H1 (cell line): ENCODE measurements at regions of chr13 and their contacts with region 1.

Region 1: DNA sequence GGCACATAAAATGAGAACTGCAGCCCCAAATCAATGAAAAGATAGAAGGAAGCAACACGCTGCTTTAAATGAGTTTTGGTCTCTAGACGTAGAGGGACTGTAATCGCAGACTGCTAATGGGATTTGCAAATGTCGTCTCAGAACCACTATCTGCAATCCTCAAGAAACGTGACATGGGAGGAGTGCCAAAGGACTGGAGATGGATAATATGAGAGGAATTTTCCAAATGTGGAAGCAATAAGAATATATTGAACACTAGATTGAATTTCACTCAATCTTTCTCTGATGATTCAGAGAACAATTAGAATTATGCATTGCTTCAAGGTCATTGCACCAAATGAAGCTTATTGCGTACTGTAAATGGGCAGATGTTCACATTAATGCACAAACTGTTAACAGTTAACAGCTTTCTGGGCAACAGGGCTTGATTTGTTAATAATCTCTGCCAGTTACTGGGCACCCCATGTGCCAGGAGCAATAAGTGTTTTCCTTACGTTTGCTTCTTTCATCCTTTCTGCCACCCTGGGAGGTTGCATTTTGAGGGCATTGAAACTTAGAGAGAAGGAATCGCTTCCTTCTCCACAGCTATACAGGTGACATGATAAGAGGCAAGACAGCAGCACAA is 62.8 kb upstream of the WASF3 start:
- DNase-seq: no peak
- H3K4me3 ChIP-seq: no peak overlapping the region
- H3K27ac ChIP-seq: no peak overlapping the region
- H3K4me1 ChIP-seq: no peaks in the 10 kb centered on the region
- H3K27me3 ChIP-seq: no peaks in the 10 kb centered on the region
- CTCF ChIP-seq: no peak
- EP300 ChIP-seq: no peak
- POLR2A ChIP-seq: no peak
- RAD21 ChIP-seq: no peak

Region 2: DNA sequence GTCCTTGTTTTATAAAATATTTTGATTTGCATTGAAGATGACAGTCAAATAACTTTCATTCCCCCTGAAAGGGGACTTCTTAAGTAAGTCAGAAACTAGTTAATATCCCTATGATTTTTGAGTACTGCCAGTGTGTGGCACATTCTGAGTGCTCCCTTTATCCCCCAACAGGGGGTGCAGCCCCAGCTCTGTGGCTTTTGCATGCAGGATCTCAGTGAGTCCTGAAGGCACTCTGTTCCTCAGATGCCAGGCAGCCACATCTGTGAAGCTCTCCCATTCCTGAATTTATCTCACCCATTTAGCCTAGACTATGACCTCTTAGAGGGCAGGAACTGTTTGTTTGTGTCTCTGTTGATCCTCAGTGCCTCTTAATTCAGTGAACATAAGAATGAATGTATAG is 117.6 kb before region 1 on chr13:
- CTCF ChIA-PET with region 1: interaction called, 17 read pairs
- POLR2A ChIA-PET with region 1: no interaction called
- DNase-seq: peak; percentile 7 to 59
- H3K4me3 ChIP-seq: no peak overlapping the region
- H3K27ac ChIP-seq: no peak overlapping the region
- H3K4me1 ChIP-seq: no peaks in the 10 kb centered on the region; a peak in 1 of 7 replicates
- H3K27me3 ChIP-seq: no peaks in the 10 kb centered on the region
- CTCF ChIP-seq: peak; percentile 61 to 71 (median 65)
- EP300 ChIP-seq: no peak
- POLR2A ChIP-seq: no peak
- RAD21 ChIP-seq: peak; percentile 45 to 65

Region 3: DNA sequence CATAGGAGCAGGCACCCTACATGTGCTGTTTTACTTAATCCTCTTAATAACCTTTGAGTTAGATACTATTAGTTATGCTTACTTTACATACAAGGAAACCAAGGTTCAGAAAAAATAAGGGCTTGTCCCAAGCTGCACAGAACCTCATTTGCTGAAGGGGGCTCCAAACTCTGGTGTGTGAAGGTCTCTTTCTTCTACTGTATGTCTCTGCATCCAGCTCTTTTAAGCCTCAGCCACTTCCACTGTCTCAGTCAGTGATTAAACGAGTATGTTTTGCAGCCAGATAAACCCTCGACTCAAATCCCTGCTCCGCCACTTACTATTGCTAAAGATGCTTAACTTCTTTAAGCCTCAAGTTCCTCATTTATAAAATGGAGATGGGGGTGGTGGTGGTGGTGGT is 49.6 kb before region 1 on chr13:
- CTCF ChIA-PET with region 1: interaction called, 19 read pairs
- POLR2A ChIA-PET with region 1: no interaction called
- DNase-seq: no peak
- H3K4me3 ChIP-seq: no peak overlapping the region
- H3K27ac ChIP-seq: no peak overlapping the region
- H3K4me1 ChIP-seq: no peaks in the 10 kb centered on the region
- H3K27me3 ChIP-seq: no peaks in the 10 kb centered on the region
- CTCF ChIP-seq: peak in 2 of 3 experiments; percentile 19 to 47; a peak in 2 of 4 replicates
- EP300 ChIP-seq: no peak
- POLR2A ChIP-seq: no peak
- RAD21 ChIP-seq: peak; percentile 43 to 60

Region 4: DNA sequence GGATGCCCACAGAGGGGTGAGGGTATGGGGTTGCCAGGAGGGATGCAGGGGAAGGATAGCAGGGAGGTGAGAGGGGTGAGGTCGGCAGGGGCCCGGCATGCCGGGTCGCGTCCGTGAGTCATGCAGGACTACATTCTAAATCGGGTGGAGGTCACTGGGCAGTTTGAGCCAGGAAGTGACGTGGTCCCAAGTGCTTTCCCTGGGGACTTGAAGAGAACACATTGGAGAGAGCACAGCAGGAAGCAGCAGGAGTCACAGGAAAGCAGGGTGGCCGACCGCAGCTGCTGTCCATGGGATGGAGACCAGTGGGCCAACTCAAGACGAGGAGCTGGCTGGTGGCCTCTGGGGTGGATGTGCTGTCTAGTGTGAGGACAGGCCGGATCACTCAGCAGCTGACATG is 29.2 kb before region 1 on chr13:
- CTCF ChIA-PET with region 1: no interaction called
- POLR2A ChIA-PET with region 1: no interaction called
- DNase-seq: peak in 1 of 2 experiments; percentile 26
- H3K4me3 ChIP-seq: no peak overlapping the region
- H3K27ac ChIP-seq: no peak overlapping the region
- H3K4me1 ChIP-seq: peaks cover 0 to 2% (median 0%) of the 10 kb centered on the region in 4 experiments; a peak in 3 of 7 replicates
- H3K27me3 ChIP-seq: no peaks in the 10 kb centered on the region
- CTCF ChIP-seq: no peak
- EP300 ChIP-seq: no peak
- POLR2A ChIP-seq: no peak
- RAD21 ChIP-seq: no peak

Region 5: DNA sequence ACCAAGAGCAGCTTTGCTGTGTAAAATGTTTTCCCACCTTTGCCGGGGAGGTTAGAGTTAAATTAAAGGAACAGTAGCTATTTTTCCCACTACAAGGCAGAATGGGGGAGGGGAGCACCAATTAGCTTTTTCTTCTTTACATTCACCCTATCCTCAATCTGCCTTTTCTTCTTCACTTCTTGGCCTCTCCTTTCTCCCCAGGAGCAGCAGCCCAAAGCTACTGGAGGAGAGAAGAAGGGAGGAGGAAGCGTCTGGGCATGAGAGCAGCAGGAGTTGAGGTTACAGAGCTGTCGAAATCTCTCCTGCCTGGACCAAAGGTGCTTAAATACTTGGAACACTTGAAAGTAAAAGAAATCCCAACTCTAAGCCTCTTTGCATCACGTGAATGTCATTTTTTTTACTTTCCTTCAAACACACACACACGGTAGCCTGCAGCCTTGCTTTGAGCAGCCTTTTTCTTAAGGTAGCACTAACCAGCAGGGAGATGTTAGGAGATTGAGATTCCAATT is 23.8 kb after region 1 on chr13:
- CTCF ChIA-PET with region 1: interaction called, 10 read pairs
- POLR2A ChIA-PET with region 1: no interaction called
- DNase-seq: peak in 1 of 2 experiments; percentile 48
- H3K4me3 ChIP-seq: peak overlapping the region in 2 of 4 experiments; percentile 15 to 29; a peak in 2 of 8 replicates
- H3K27ac ChIP-seq: peak overlapping the region; percentile 67
- H3K4me1 ChIP-seq: peaks cover 0 to 12% (median 7%) of the 10 kb centered on the region in 4 experiments; a peak in 4 of 7 replicates
- H3K27me3 ChIP-seq: no peaks in the 10 kb centered on the region
- CTCF ChIP-seq: no peak
- EP300 ChIP-seq: no peak
- POLR2A ChIP-seq: no peak
- RAD21 ChIP-seq: no peak

Region 6: GRCh38 chr13:26605845-26606244 is 111.2 kb after region 1 on chr13:
- CTCF ChIA-PET with region 1: interaction called, 15 read pairs
- POLR2A ChIA-PET with region 1: no interaction called
- DNase-seq: peak in 1 of 2 experiments; percentile 25
- H3K4me3 ChIP-seq: no peak overlapping the region
- H3K27ac ChIP-seq: no peak overlapping the region
- H3K4me1 ChIP-seq: peaks cover 0 to 3% (median 0%) of the 10 kb centered on the region in 4 experiments; a peak in 1 of 7 replicates
- H3K27me3 ChIP-seq: no peaks in the 10 kb centered on the region
- CTCF ChIP-seq: peak; percentile 51 to 62 (median 61)
- EP300 ChIP-seq: no peak
- POLR2A ChIP-seq: no peak
- RAD21 ChIP-seq: peak; percentile 54 to 58

Region 7: DNA sequence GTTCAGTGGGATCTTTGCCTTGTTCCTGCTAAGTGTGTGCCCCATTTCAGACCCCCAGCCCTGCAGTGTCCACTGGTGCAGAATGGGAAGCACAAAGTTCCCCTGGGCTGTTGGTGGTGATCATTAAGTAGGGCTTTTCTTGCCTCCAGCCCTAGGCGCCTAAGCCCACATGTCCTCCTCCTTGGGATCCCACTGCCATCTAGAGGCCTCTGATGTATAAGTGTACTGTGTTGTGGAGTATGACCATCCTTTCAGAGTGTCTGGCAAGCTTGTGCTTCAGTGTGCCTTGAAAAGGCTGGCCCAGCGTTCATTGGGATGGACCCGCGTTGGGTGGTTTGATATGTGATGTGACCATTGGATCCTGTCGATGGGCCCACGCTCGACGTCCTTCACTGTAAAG is 134.0 kb after region 1 on chr13:
- CTCF ChIA-PET with region 1: interaction called, 13 read pairs
- POLR2A ChIA-PET with region 1: no interaction called
- DNase-seq: no peak
- H3K4me3 ChIP-seq: no peak overlapping the region
- H3K27ac ChIP-seq: no peak overlapping the region
- H3K4me1 ChIP-seq: peaks cover 0 to 5% (median 3%) of the 10 kb centered on the region in 4 experiments; a peak in 1 of 7 replicates
- H3K27me3 ChIP-seq: no peaks in the 10 kb centered on the region
- CTCF ChIP-seq: peak; percentile 7 to 50 (median 48)
- EP300 ChIP-seq: no peak
- POLR2A ChIP-seq: no peak
- RAD21 ChIP-seq: peak; percentile 62 to 71